ENCODE measurements at regions of chr10 and their contacts with region 1.

Region 1: DNA sequence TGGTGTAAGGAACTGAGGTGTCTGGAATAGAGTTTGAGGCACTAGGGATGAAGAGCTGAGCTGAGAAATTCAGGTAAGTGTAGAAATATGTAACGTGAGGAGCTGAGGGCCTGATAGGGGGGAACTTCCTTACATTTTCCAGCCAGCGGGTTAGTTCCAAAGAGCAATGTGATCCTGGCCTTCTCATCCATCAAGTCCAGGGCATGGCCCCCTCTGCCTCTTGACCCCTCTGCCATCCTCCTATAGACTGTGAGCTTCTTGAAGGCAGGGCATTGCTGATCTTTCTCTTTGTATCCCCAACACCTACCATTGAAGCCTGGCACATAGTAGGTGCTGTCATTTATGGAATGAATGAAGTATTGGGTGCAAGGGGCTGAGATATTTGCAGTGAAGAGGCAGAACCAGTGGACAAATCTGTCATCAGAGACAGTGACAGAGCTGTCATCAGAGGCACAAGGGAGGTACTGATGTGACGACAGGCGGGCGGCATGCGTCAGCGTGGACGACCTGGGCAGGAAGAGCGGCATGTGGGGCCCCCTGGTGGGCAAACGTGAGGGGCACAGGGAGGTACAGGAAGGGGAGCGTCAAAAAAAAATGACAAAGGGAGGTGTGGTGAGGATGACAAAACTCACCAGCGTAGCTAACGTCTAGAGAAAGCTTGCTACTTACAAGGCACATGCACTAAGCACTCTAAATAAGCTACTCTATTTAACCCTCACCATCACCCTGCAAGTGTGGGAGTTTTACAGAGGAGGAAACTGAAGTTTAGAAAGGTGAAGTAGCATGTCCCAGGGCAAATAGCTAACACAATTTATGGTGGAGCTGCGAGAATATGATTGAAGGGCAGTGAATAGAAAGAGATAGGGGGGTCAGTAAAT is 5.2 kb upstream of the CAMK2G start:
- DNase-seq: peak; percentile 98
- ATAC-seq: peak; percentile 89
- H3K4me3 Mint-ChIP-seq: no peak overlapping the region
- H3K27ac Mint-ChIP-seq: peak overlapping the region; percentile 43
- H3K4me1 Mint-ChIP-seq: peaks cover 39% of the 10 kb centered on the region
- H3K27me3 Mint-ChIP-seq: no peaks in the 10 kb centered on the region
- CTCF ChIP-seq: peak; percentile 89

Region 2: DNA sequence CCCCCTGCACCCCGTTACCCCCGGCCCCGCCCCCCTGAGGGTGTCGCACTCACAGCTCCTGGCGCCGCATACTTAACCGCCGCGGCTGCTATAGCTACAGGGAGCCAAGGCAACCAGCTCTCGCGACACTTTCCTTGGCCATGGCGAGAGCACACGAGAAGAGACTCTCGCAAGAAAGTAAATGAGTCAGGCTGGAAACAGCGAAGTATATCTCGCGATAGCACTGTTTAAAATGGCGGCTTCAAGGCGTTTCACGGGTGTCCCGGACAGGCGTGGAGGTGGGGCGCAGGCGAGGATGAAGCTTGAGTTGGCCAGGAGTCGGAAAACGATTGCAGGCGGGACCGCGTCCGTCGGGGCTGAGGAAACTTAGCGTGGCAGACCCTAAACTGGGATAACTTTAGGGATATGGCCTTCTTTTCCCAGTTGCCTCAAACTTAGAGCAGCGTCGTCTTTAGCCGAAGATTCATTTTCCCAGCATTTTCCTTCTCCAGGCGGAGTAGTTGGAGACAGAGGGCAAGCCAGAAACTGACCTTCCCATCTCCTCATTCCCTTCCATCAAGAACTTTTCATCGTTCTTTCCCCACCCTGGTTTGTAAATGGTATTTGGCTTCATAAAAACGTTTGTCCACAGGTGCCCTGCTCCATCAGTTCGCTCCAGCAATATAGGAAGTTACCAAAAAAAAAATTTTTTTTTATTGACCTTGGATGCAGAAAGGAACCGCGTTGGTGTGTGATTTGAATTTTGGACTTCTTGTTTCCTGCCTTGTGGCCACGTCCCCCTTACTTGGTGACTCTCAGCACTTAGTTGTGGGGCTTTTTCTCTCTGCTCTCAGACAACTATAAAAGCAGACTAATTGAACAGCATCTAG is 253.4 kb before region 1 on chr10:
- CTCF ChIA-PET with region 1: no interaction called
- POLR2A ChIA-PET with region 1: no interaction called
- intact Hi-C with region 1: no loop called
- DNase-seq: peak; percentile 98
- ATAC-seq: peak; percentile 98
- H3K4me3 Mint-ChIP-seq: peak overlapping the region; percentile 93
- H3K27ac Mint-ChIP-seq: peak overlapping the region; percentile 98
- H3K4me1 Mint-ChIP-seq: peaks cover 16% of the 10 kb centered on the region
- H3K27me3 Mint-ChIP-seq: no peaks in the 10 kb centered on the region
- CTCF ChIP-seq: no peak

Region 3: DNA sequence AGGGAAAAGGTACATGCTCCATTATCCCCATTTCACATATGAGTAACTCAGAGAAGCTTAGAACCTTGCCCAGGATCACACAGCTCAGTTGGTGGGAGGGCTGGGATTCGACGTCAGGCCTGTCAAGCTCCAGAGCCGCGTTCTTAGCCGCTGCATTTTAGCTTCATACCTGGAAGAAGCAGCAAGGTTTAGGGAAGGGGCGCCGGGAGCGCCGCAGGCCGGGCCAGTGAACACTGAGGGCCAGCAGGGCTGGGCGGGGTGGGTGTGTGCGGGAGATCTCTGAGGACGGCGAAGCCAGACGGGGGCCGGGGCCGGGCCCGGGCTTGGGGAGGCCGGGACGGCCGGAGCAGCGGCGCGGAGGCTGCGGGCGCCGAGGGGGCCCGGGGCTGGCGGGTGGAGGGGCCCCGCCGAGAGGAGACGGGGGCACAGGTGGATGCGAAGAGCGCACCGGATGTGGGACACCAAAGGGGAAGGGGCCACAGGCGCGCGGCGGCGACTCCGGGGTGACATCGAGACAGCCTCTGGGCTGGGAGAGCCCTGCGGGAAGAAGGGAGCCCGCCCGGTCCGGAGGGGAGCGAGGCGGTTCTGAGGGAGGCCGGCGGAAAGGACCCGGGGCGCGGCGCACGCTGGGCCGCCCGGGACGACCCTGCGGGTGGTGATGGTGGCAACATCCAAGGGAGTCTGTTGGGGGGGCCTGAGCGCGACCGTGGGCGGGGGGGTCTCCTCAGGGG is 68.6 kb before region 1 on chr10:
- CTCF ChIA-PET with region 1: interaction called, 15 read pairs
- POLR2A ChIA-PET with region 1: interaction called, 3 read pairs
- intact Hi-C with region 1: no loop called
- DNase-seq: peak; percentile 65
- ATAC-seq: peak; percentile 15
- H3K4me3 Mint-ChIP-seq: peak overlapping the region; percentile 82
- H3K27ac Mint-ChIP-seq: peak overlapping the region; percentile 98
- H3K4me1 Mint-ChIP-seq: peaks cover 44% of the 10 kb centered on the region
- H3K27me3 Mint-ChIP-seq: no peaks in the 10 kb centered on the region
- CTCF ChIP-seq: no peak

Region 4: DNA sequence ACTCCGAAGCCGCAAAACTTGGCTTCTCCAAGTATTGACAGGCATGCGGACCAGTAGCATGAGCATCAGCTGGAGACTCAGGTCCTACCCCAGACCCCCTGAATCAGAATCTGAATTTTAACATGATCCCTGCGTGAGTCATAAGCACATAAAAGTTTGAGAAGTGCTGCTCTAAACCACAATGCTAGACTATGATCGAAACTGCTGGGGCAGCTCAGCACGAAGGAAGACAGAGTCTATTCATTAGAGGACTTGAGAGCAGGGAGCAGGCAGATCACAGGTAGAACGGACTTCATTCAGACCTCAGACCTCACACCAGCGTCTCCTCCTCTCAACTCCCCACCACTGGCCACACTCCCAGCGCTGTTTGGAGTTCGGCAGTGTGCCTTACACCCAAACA is 22.1 kb before region 1 on chr10:
- CTCF ChIA-PET with region 1: interaction called, 430 read pairs
- POLR2A ChIA-PET with region 1: interaction called, 32 read pairs
- intact Hi-C with region 1: no loop called
- DNase-seq: peak; percentile 64
- ATAC-seq: peak; percentile 86
- H3K4me3 Mint-ChIP-seq: peak overlapping the region; percentile 19
- H3K27ac Mint-ChIP-seq: peak overlapping the region; percentile 72
- H3K4me1 Mint-ChIP-seq: peaks cover 54% of the 10 kb centered on the region
- H3K27me3 Mint-ChIP-seq: no peaks in the 10 kb centered on the region
- CTCF ChIP-seq: no peak

Region 5: DNA sequence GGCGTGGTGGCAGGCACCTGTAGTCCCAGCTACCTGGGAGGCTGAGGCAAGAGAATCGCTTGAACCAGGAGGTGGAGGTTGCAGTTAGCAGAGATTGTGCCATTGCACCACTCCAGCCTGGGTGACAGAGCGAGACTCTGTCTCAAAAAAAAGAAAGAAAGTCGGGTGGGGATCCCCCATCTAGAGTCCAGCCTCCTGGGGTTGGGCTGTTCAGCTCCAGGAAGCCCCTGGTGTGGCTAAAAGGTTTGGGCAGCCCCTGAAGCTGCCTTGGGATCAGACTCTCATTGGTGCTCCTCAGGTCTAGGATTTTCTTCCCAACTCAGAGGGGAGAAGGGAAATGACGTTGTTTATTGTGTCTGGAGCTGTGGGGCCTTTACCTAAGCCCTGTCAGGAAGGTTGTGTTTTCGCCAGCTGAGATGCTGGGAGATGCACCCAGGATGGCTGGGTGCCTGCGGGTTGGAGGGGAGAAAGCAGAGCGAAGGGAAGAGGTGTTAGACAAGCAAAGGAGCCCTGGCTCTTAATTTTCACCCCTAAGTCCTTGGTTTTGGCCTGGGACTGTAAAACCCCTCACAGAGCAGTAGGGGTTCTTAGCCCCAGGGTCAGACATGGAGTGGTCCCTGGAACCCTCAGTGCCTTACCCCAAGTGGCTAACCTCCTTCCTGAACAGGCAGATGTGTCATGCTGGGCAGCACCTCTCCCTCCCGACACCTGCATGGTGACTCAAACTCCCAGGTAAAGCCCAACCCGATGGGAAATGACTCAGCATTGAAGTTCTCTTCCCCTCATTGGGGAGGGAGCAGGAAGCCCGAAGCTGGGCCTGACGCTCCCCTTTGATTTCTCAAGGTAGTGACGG is 52.5 kb after region 1 on chr10:
- CTCF ChIA-PET with region 1: interaction called, 21 read pairs
- POLR2A ChIA-PET with region 1: interaction called, 3 read pairs
- intact Hi-C with region 1: no loop called
- DNase-seq: peak; percentile 77
- ATAC-seq: peak; percentile 91
- H3K4me3 Mint-ChIP-seq: no peak overlapping the region
- H3K27ac Mint-ChIP-seq: peak overlapping the region; percentile 28
- H3K4me1 Mint-ChIP-seq: peaks cover 17% of the 10 kb centered on the region
- H3K27me3 Mint-ChIP-seq: peaks cover 19% of the 10 kb centered on the region
- CTCF ChIP-seq: no peak

Region 6: DNA sequence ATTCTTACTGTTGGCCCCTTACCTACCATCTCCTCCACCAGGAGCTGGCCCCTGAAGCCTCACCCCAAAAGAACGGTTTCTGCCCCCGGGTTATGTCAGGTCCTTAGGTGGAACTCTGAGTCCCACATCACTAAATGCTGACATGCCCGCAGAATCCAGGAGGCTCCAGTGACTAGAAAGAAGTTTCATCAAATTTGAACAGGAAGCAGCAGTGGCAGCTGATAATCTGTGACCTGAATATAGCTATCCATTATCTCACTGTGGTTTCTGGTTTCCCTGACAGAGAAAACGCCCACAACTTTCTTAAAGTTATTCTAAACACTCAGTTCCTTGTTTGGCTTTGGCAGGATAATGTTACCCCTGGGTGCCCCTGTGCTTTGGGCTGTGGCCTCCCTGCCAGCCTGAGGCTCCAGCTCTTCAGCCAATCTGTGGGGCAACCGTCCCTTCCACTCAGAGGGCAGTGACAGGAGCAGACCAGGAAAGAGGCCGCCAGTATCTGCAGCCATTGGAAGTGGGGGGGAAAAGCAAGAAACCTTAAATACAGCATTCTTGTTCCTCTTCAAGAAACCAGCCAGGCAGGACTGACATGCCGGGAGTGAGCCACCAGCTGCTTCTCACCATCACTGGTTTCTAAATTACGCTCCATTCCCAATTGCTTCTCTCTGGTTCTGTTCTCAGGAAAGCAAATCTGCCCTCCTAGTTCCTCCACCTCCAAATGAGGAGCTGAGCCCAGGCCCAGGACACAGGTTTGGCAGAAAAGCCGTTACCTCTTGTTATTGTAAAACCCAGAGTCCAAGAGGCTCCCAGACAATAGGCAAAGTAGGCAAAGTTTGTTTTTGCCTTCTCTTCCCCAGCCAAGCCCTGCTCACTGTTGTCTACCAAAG is 77.2 kb after region 1 on chr10:
- CTCF ChIA-PET with region 1: interaction called, 16 read pairs
- POLR2A ChIA-PET with region 1: no interaction called
- intact Hi-C with region 1: no loop called
- DNase-seq: peak; percentile 53
- ATAC-seq: peak; percentile 82
- H3K4me3 Mint-ChIP-seq: peak overlapping the region; percentile 38
- H3K27ac Mint-ChIP-seq: peak overlapping the region; percentile 84
- H3K4me1 Mint-ChIP-seq: peaks cover 40% of the 10 kb centered on the region
- H3K27me3 Mint-ChIP-seq: no peaks in the 10 kb centered on the region
- CTCF ChIP-seq: no peak

Measured in activated CD8-positive, alpha-beta T cell treated with anti-CD3 and anti-CD28 coated beads for 36 hours (primary cell).